ENCODE measurements at regions of chr6 and their contacts with region 1.

Region 1: GRCh38 chr6:152948150-152948768 is 34.6 kb downstream of the FBXO5 start:
- DNase-seq: no peak
- ATAC-seq: peak; percentile 83

Region 2: GRCh38 chr6:151999194-151999593 is 949.1 kb before region 1 on chr6:
- intact Hi-C with region 1: no loop called
- DNase-seq: no peak
- ATAC-seq: no peak

Region 3: GRCh38 chr6:152552616-152553209 is 395.5 kb before region 1 on chr6:
- intact Hi-C with region 1: loop called (anchors 10 kb)
- DNase-seq: peak; percentile 73
- ATAC-seq: peak; percentile 89

Region 4: GRCh38 chr6:152863618-152864326 is 84.5 kb before region 1 on chr6:
- intact Hi-C with region 1: loop called (anchors 1 kb)
- DNase-seq: no peak
- ATAC-seq: peak; percentile 87

Region 5: DNA sequence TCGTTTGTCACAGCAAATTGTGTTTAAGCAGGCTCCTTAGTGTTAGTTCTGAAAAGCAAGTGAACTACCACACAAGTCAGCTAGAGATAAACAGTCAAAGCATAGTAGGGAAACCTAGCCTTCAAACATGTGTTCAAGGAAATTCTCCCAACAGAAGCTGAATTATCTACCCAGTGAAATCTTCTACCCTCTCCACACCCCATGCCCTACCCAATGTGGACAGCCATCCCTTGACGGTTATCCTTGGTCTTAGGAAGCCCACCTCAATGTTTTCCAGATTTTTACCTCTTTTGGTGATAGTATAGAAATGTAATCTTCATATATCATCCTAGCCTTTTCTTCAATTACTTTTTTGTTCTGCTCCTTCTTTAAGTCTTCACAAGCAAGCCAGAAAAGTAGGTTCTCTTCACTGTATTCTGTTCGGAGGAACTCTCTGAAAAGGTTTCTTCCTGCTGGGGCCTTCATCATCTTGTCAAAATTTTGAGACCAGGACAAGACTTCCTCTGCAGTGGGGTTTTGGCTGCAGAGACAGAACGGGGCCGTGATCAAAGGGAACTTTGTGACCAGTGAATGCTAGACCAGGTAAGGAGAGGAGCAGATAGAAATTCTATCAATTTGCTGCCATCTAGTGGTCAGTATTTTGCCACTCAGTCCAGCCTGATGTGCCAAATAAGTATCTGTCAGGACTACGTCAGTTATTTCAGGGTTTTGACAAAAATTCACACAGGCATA is 75.9 kb after region 1 on chr6:
- intact Hi-C with region 1: loop called (anchors 10 kb)
- DNase-seq: no peak
- ATAC-seq: peak; percentile 87